ENCODE measurements at regions of chr12 and their contacts with region 1.

Region 1: DNA sequence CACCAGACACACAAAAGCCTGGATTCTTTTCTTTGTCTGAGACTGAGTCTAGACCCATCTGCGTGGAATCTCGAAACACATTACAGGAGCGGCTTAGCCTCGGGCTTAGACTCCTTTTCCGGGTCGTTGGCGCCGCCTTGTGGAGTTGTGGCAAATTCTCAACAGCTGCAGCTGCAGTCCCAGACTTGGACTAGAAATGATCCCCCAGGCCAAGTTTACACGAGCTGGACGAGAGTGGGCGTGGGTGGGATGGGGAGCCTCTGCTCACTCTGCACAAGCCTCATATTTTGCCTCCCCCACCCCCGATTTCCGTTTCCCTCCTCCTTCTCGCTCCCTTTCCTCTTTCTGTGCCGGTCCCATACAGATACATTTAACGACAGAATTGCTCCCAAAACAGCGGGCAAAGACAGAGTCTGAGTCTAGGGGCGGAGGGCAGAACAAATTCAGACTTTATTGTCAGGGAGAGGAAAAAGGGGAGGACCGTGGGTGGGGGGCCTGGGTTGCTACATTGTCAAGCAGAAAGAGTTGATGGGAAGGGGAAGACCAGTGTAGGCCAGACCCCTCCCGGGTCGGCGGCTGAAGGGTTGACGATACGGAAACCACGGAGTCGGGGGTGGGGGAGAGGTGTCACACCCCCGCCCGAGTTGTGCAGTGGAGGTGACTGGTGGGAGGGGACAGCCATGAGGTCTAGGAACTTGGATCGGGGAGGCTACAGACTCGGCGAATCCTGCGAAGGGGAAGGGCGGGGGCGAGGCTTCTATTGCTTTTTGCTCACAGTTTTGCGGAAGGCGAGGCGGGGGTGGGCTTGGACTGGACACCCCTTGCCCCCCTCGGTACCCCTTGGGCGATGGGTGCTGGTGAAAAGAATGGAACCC is 4.7 kb upstream of the GPR84 start:
- DNase-seq: peak; percentile 93
- H3K4me3 Mint-ChIP-seq: peak overlapping the region; percentile 78
- H3K27ac Mint-ChIP-seq: peak overlapping the region; percentile 58
- H3K4me1 Mint-ChIP-seq: peaks cover 45% of the 10 kb centered on the region
- H3K27me3 Mint-ChIP-seq: peaks cover 40% of the 10 kb centered on the region
- CTCF ChIP-seq: peak; percentile 57

Region 2: GRCh38 chr12:54220092-54220557 is 148.8 kb before region 1 on chr12:
- CTCF ChIA-PET with region 1: interaction called, 5 read pairs
- intact Hi-C with region 1: loop called (anchors 2 kb)
- DNase-seq: peak; percentile 76
- H3K4me3 Mint-ChIP-seq: no peak overlapping the region
- H3K27ac Mint-ChIP-seq: no peak overlapping the region
- H3K4me1 Mint-ChIP-seq: peaks cover 16% of the 10 kb centered on the region
- H3K27me3 Mint-ChIP-seq: peaks cover 36% of the 10 kb centered on the region
- CTCF ChIP-seq: peak; percentile 90

Region 3: GRCh38 chr12:54259194-54260011 is 109.5 kb before region 1 on chr12:
- CTCF ChIA-PET with region 1: interaction called, 14 read pairs
- intact Hi-C with region 1: loop called (anchors 10 kb)
- DNase-seq: peak; percentile 66
- H3K4me3 Mint-ChIP-seq: peak overlapping the region; percentile 45
- H3K27ac Mint-ChIP-seq: peak overlapping the region; percentile 47
- H3K4me1 Mint-ChIP-seq: peaks cover 15% of the 10 kb centered on the region
- H3K27me3 Mint-ChIP-seq: no peaks in the 10 kb centered on the region
- CTCF ChIP-seq: no peak

Region 4: DNA sequence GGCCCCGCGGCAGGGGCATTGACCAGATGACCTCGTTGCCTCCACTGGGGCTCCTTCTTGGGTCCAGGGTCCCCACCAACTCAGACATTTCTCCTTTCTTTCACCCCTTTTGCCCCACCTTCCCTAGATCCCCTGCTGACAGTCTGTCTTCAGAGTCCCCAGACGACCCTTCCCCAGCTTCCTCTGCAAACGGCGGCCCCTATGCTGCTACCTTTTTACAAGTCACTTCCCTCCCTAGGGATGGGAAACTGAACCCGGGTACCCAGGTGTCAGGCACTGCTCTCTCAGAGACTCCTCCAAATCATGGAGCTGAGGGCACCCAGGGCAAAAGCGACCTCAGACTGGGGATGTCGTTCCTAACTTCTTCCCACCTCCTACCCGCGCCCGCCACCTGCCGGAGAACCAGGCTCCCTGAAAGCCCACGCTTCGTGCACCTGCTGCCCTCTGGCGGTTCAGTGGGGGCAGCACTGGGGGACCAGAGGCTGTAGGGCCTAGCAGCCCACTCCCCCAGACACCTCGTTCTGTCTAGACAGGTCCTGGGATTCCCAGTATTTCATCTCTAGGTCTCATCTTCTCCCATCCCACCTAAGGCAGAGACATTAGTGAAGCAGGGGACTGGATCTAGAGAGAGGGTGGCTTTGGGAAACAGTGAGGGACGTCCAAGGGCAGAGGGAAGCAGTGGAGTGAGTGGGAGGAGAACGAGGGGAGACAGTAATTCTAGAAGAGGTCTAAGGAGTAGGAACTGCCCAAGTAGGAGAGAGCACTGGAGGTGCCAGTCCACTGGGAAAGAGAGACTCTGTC is 10.7 kb after region 1 on chr12:
- CTCF ChIA-PET with region 1: interaction called, 34 read pairs
- intact Hi-C with region 1: loop called (anchors 1 kb)
- DNase-seq: peak; percentile 98
- H3K4me3 Mint-ChIP-seq: peak overlapping the region; percentile 73
- H3K27ac Mint-ChIP-seq: no peak overlapping the region
- H3K4me1 Mint-ChIP-seq: peaks cover 25% of the 10 kb centered on the region
- H3K27me3 Mint-ChIP-seq: no peaks in the 10 kb centered on the region
- CTCF ChIP-seq: peak; percentile 100